Activated CD4-positive, alpha-beta T cell treated with anti-CD3 and anti-CD28 coated beads for 36 hours (primary cell): ENCODE measurements at regions of chr7 and their contacts with region 1.

Region 1: DNA sequence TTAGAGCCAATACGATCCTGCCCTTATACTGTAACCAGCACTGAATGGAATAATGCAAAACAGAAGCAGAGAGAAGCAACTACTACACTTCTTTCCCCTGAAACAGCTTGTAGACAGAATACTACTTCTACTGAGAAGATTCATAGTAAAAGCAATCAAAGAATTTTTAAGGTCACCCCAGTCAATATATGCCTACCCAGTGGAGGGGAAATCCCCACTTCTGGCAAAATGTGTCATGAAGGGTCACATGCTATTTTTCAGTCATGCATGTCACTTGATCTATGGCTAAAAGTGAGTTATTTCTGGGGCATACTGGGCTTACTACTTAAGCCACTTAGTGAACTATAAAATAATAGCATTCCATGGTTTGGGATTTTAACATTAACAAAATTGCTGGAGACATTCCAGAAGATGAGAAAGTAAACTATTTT is 25.6 kb downstream of the IRF5 start:
- DNase-seq: peak; percentile 70
- ATAC-seq: peak; percentile 85
- H3K4me3 Mint-ChIP-seq: peak overlapping the region; percentile 21
- H3K27ac Mint-ChIP-seq: peak overlapping the region; percentile 93
- H3K4me1 Mint-ChIP-seq: peaks cover 35% of the 10 kb centered on the region
- H3K27me3 Mint-ChIP-seq: no peaks in the 10 kb centered on the region

Region 2: DNA sequence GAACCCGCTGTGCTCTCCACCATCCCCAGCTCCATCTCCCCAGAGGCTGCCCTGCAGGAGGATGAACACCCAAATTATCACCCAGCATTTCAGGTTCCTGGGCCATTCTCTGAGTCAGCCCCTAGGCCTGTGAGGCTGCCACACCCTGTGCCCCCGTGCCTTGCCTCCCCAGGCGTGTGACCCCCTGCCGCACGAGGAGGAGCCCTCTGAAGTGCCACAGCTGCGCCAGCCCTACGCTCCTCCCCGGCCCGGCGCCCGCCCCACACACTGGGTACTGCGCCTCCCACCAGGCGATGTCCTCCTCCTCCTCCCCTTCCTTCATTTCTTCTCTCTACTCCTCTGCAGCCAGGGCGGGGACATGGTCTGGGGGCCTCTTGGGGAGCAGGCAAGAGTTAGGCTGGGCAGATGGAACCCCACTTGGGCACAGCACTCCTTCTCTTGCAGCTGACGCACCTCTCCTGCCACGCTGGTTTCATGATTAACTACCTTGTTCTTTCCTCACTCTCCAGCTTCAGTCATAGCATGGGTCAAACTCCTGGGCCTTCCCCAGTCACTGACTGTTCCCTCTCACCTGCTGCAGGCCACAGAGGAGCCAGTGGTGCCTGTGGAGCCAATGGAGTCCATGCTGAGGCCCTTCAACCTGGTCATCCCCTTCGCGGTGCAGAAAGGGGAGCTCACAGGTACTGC is 113.4 kb before region 1 on chr7:
- CTCF ChIA-PET with region 1: no interaction called
- POLR2A ChIA-PET with region 1: no interaction called
- intact Hi-C with region 1: no loop called
- DNase-seq: no peak
- ATAC-seq: no peak
- H3K4me3 Mint-ChIP-seq: no peak overlapping the region
- H3K27ac Mint-ChIP-seq: no peak overlapping the region
- H3K4me1 Mint-ChIP-seq: no peaks in the 10 kb centered on the region
- H3K27me3 Mint-ChIP-seq: no peaks in the 10 kb centered on the region

Region 3: DNA sequence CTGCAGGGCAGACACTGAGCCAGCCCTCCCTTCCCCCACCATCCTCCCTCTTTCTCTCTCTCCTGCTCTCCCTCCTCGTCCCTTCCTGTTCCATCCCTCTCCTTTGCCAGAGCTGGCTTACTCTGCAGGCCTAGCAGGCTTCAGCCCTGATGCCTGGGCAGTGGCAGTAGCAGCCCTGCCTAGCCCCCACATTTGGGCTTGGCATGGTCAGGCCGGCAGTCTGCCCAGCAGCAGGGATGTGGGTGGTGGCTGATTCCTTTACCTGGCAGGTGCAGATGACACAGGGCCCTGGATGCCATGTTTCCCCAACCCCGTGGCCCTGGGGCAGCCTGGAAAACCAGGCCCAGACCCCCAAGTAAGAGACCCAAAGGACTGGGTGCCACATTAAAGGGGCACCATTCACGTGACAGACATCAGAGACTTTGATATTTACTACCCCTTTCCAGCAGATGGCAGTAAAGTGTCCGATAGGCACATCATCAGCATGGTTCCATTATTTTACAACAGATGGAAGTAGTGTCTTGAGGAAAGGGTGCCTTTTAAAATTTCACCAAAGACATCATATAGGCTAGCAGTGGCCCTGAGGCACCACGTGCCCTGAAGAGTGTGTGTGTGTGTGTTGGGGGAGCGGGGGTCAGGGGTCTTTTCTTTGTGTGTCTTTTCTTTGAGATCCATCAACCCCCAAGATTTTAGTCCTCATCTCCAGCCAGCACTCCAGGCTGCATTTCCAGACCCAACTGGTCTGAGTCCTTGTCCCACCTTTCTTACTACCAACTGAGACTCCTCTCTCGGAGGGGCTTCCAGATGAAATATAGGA is 58.8 kb before region 1 on chr7:
- CTCF ChIA-PET with region 1: no interaction called
- POLR2A ChIA-PET with region 1: no interaction called
- intact Hi-C with region 1: loop called in 1 of 2 experiments (anchors 2 kb)
- DNase-seq: no peak
- ATAC-seq: peak; percentile 89
- H3K4me3 Mint-ChIP-seq: no peak overlapping the region
- H3K27ac Mint-ChIP-seq: no peak overlapping the region
- H3K4me1 Mint-ChIP-seq: peaks cover 3% of the 10 kb centered on the region
- H3K27me3 Mint-ChIP-seq: peaks cover 19% of the 10 kb centered on the region

Region 4: DNA sequence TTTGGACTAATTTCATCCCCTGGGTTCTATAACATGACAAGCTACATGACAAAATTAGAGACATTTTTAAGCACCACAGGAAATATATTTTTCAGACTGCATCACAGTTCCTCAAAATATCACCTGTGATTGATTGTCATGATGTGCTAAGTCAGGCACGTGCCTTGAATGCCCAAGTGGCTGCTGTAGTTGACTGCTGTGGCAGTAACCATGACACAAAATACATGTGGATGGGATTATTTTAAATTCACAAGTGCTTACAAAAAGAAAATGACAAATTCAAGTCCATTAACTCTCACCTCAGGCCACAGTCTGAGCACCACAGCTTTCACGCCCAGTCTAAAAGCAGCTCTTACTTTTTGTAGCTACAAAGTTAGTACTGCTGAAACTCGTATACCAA is 46.1 kb after region 1 on chr7:
- CTCF ChIA-PET with region 1: interaction called, 7 read pairs
- POLR2A ChIA-PET with region 1: interaction called, 3 read pairs
- intact Hi-C with region 1: loop called (anchors 1 to 2 kb)
- DNase-seq: peak; percentile 11
- ATAC-seq: no peak
- H3K4me3 Mint-ChIP-seq: no peak overlapping the region
- H3K27ac Mint-ChIP-seq: peak overlapping the region; percentile 87
- H3K4me1 Mint-ChIP-seq: peaks cover 40% of the 10 kb centered on the region
- H3K27me3 Mint-ChIP-seq: no peaks in the 10 kb centered on the region

Region 5: GRCh38 chr7:129054438-129055293 is 91.3 kb after region 1 on chr7 and contains the start of gene TNPO3:
- CTCF ChIA-PET with region 1: interaction called, 3 read pairs
- POLR2A ChIA-PET with region 1: interaction called, 7 read pairs
- intact Hi-C with region 1: loop called (anchors 1 to 2 kb)
- DNase-seq: peak; percentile 94
- ATAC-seq: peak; percentile 91
- H3K4me3 Mint-ChIP-seq: peak within 1 kb of the TSS; percentile 89
- H3K27ac Mint-ChIP-seq: peak within 1 kb of the TSS; percentile 99
- H3K4me1 Mint-ChIP-seq: peaks cover 28% of the 10 kb centered on the region
- H3K27me3 Mint-ChIP-seq: peaks cover 3% of the 10 kb centered on the region
- total RNA-seq, gene TNPO3: 57.7 to 60.5 TPM

Region 6: DNA sequence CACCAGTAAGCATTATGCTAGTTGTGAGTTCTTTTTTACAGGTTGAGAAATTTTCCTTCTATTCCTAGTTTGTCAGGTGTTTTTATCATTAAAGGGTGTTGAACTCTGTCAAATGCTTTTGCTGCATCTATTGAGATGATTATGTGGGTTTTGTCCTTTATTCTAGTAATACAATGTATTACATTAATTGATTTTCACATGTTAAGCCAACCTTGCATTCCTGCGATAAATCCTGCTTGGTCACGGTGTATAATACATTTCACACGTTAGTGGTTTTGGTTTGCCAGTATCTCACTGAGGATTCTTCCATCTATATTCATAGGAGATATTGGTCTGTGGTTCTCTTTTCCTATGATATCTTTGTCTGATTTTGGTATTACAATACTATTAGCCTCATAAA is 853.4 kb after region 1 on chr7:
- CTCF ChIA-PET with region 1: no interaction called
- POLR2A ChIA-PET with region 1: no interaction called
- intact Hi-C with region 1: no loop called
- DNase-seq: no peak
- ATAC-seq: no peak
- H3K4me3 Mint-ChIP-seq: no peak overlapping the region
- H3K27ac Mint-ChIP-seq: no peak overlapping the region
- H3K4me1 Mint-ChIP-seq: no peaks in the 10 kb centered on the region
- H3K27me3 Mint-ChIP-seq: peaks cover 3% of the 10 kb centered on the region